ENCODE measurements at regions of chr3 and their contacts with region 1.

Region 1: DNA sequence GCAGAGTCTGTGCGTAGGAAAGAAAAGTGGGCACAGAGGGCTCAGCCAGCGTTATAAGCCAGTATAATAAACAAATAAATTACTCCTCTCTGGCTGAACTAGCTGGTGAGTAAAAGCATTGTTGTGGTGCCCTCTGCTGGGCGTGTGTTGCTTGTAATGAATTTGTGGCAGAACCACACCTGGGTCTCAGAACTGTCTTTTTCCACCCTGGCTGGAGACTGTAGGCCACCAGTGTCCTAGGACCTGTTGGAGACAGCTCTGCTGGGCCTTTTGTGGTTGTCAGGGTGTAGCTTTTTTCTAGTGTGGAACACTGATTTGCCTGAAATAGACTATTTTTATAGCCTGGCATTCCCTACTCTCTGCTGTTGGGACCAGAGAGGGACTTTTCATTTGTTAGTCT is 130.5 kb upstream of the EIF1B start:
- DNase-seq: peak; percentile 31 to 63
- ATAC-seq: peak in 1 of 3 donors; percentile 64
- H3K4me3 ChIP-seq: no peak overlapping the region
- H3K4me3 Mint-ChIP-seq: no peak overlapping the region
- H3K27ac ChIP-seq: no peak overlapping the region
- H3K27ac Mint-ChIP-seq: no peak overlapping the region
- H3K4me1 ChIP-seq: no peaks in the 10 kb centered on the region
- H3K4me1 Mint-ChIP-seq: peaks cover 0 to 5% of the 10 kb centered on the region in 2 donors
- H3K27me3 ChIP-seq: no peaks in the 10 kb centered on the region
- H3K27me3 Mint-ChIP-seq: no peaks in the 10 kb centered on the region
- CTCF ChIP-seq: peak; percentile 65

Region 2: DNA sequence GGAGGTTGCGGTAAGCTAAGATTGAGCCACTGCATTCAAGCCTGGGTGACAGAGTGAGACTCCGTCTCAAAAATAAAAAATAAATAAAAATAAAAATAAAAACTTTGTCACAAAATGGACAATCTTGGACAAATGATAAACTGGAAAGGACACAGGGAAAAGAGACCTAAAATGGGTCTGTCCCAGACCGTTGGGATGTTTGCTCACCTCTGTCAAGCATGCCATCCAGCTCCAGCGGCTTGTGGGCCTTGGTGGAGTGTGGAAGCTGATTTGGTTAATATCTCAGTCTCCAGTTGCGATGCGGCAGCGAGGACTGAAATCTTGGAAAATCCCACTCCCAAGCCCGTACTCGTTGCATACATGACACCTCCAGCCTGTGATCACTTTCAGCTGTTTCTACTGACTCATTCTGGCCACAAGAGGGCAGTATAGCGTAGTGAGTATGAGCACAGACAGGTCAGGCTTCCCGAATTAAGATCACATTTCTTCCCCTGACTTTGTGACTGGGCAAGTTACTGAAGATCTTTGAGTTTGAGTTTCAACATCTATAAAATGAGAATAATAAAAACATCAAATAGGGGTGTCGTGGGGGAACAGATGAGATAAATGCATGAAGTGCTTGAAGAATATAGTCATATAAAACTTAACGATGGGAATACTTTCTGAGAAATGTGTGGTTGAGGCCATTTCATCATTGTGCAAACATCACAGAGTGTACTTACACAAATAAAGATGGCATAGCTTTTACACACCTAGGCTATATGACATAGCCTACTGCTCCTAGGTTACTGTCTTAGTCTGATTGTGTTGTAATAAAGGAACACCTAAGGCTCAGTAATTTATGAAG is 731.2 kb before region 1 on chr3:
- intact Hi-C with region 1: loop called (anchors 2 kb)
- DNase-seq: peak; percentile 17 to 88
- ATAC-seq: peak; percentile 82 to 96 (median 83)
- H3K4me3 ChIP-seq: no peak overlapping the region
- H3K4me3 Mint-ChIP-seq: no peak overlapping the region
- H3K27ac ChIP-seq: no peak overlapping the region
- H3K27ac Mint-ChIP-seq: no peak overlapping the region
- H3K4me1 ChIP-seq: peaks cover 3% of the 10 kb centered on the region
- H3K4me1 Mint-ChIP-seq: peaks cover 0 to 4% of the 10 kb centered on the region in 2 donors
- H3K27me3 ChIP-seq: no peaks in the 10 kb centered on the region
- H3K27me3 Mint-ChIP-seq: peaks cover 3 to 19% of the 10 kb centered on the region in 2 donors
- CTCF ChIP-seq: peak; percentile 91

Region 3: DNA sequence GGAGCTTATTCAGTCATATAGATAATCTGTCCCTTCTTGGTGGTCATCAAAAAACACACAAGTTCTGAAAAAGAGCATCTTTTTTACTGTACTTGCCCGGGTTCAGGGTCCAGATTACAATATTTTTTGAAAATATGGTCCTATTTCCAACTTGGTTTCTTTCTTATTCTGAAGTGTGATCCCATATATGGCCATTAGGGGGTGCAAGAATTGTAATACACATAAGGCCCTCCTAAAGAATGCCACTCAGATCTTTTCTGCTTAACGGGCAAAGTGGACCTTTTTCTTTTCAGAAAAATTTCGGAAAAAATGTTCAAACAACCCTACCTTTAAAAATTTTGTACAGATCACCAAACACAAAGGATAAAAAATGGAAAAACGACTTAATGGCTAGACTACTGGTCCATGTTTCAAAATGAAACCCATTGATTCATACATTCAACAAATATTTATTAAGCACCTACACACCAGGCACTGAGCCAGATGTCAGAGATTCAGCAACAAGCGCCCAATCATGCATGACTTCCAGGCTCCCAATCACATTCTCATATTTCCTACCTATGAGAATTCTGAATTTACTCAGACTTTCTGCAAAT is 471.6 kb before region 1 on chr3:
- intact Hi-C with region 1: loop called (anchors 2 kb)
- DNase-seq: peak in 1 of 2 donors; percentile 34
- ATAC-seq: peak in 1 of 3 donors; percentile 47
- H3K4me3 ChIP-seq: no peak overlapping the region
- H3K4me3 Mint-ChIP-seq: no peak overlapping the region
- H3K27ac ChIP-seq: no peak overlapping the region
- H3K27ac Mint-ChIP-seq: no peak overlapping the region
- H3K4me1 ChIP-seq: no peaks in the 10 kb centered on the region
- H3K4me1 Mint-ChIP-seq: peaks cover 0 to 7% of the 10 kb centered on the region in 2 donors
- H3K27me3 ChIP-seq: no peaks in the 10 kb centered on the region
- H3K27me3 Mint-ChIP-seq: peaks cover under 1 to 11% of the 10 kb centered on the region in 2 donors
- CTCF ChIP-seq: peak; percentile 72